GM13976 (cell line): ENCODE measurements at regions of chr4 and their contacts with region 1.

Region 1: GRCh38 chr4:112031712-112032328 is 113.4 kb upstream of the FAM241A start:
- DNase-seq: peak; percentile 50
- CTCF ChIP-seq: peak; percentile 52

Region 2: DNA sequence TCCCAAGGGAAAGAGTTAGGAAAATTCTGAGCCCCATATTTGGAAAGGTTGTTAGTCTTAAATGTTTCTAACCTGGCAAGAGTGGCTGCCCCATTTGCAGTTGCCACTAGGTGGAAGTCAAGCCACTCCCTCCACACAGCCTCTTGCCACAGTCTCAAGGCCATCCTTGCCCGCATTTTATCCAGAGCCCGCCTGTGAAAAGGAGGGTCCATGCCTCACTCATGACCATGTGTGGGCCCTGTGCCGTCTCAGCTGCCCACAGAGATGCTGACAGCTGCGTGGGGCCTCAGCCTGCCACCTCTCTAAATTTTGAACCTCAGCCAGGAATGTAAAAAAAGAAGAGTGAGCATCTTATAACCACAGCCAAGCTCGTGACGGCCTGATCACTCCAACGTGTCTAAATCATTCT is 88.0 kb before region 1 on chr4:
- in situ Hi-C with region 1: loop called (anchors 10 kb)
- DNase-seq: peak; percentile 39
- CTCF ChIP-seq: peak; percentile 48

Region 3: GRCh38 chr4:112093636-112094202 is 61.9 kb after region 1 on chr4:
- in situ Hi-C with region 1: no loop called
- DNase-seq: no peak
- CTCF ChIP-seq: no peak

Region 4: DNA sequence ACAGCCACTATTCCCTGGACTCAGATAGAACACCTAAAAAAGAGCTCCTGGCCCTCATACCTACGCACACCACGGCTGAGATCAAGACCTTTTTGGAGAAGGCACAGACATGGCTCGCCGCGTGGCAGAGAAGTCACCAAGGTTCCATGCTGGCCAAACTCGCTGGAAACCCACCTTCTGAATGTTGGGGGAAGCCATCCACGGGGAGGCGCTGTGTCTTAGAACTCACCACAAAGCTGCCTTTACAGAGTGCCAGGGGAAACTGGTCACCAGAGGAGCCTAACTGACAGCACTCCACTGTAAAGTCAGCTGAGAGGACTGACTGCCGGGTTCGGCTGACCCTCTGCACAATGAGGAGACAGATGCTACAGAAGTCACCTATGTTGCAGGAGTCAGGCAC is 386.3 kb after region 1 on chr4:
- in situ Hi-C with region 1: no loop called
- DNase-seq: no peak
- CTCF ChIP-seq: no peak